Psoas muscle (tissue), 8 donors: ENCODE measurements at regions of chr4 and their contacts with region 1.

Region 1: GRCh38 chr4:173556398-173557131 is 26.5 kb upstream of the HAND2 start:
- DNase-seq: no peak
- ATAC-seq: no peak
- H3K4me3 ChIP-seq: no peak overlapping the region
- H3K27ac ChIP-seq: no peak overlapping the region
- H3K4me1 ChIP-seq: no peaks in the 10 kb centered on the region
- H3K27me3 ChIP-seq: peaks cover 4 to 7% (median 5%) of the 10 kb centered on the region in 3 donors
- CTCF ChIP-seq: no peak

Region 2: DNA sequence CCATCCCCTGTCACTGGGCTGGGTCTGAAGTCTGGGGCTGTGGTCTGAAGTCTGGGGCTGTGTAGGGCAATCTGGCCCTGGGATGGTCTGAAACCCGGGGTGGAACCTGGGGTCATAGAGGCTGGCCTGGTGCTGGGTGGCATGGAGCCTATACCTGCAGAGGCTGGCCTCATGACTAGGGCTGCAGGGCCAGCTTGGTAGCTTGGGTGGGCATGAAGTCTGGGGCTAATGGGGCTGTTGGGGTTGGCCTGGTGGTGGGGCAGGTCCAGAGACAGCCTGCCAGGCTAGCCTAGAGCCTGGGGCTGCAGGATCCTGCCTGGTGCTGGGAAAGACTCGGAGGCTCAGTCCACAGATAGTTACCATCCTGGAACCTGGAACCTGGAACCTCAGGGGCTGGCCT is 350.9 kb before region 1 on chr4:
- intact Hi-C with region 1: no loop called
- DNase-seq: no peak
- ATAC-seq: no peak
- H3K4me3 ChIP-seq: no peak overlapping the region
- H3K27ac ChIP-seq: no peak overlapping the region
- H3K4me1 ChIP-seq: no peaks in the 10 kb centered on the region
- H3K27me3 ChIP-seq: no peaks in the 10 kb centered on the region
- CTCF ChIP-seq: no peak

Region 3: GRCh38 chr4:173317004-173317403 is 239.6 kb before region 1 on chr4:
- intact Hi-C with region 1: no loop called
- DNase-seq: no peak
- ATAC-seq: no peak
- H3K4me3 ChIP-seq: no peak overlapping the region
- H3K27ac ChIP-seq: no peak overlapping the region
- H3K4me1 ChIP-seq: no peaks in the 10 kb centered on the region
- H3K27me3 ChIP-seq: no peaks in the 10 kb centered on the region
- CTCF ChIP-seq: peak; percentile 5

Region 4: GRCh38 chr4:173370477-173371291 is 185.9 kb before region 1 on chr4 and contains the start of gene SAP30:
- intact Hi-C with region 1: no loop called
- DNase-seq: peak; percentile 98 to 99
- ATAC-seq: peak; percentile 95 to 98 (median 97)
- H3K4me3 ChIP-seq: peak within 1 kb of the TSS; percentile 84
- H3K27ac ChIP-seq: peak within 1 kb of the TSS; percentile 92
- H3K4me1 ChIP-seq: peaks cover 16% of the 10 kb centered on the region
- H3K27me3 ChIP-seq: no peaks in the 10 kb centered on the region
- CTCF ChIP-seq: no peak
- total RNA-seq, gene SAP30: 3.5 to 8.4 (median 6.4) TPM

Region 5: DNA sequence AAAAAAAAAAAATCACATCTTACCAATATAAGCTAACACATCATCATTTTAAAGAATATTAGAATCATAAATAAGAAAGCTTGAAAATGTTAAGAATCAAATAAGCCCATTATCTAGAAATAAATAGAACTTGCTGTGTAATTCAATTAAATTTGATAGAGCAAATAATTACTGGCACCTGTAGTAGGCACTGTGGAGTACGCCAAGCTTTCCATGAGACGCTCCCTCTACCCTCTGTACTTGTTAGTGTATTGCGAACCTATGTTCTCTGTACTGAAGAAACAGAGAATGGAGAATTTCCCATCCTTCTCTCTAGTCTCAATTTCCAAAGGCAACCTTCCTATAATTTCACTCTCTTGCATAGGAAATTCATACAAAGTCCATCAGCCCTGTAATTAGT is 35.2 kb after region 1 on chr4:
- intact Hi-C with region 1: loop called in 1 of 2 experiments (anchors 1 kb)
- DNase-seq: no peak
- ATAC-seq: no peak
- H3K4me3 ChIP-seq: no peak overlapping the region
- H3K27ac ChIP-seq: no peak overlapping the region
- H3K4me1 ChIP-seq: no peaks in the 10 kb centered on the region
- H3K27me3 ChIP-seq: no peaks in the 10 kb centered on the region
- CTCF ChIP-seq: no peak